ENCODE measurements at regions of chr6 and their contacts with region 1.

Region 1: DNA sequence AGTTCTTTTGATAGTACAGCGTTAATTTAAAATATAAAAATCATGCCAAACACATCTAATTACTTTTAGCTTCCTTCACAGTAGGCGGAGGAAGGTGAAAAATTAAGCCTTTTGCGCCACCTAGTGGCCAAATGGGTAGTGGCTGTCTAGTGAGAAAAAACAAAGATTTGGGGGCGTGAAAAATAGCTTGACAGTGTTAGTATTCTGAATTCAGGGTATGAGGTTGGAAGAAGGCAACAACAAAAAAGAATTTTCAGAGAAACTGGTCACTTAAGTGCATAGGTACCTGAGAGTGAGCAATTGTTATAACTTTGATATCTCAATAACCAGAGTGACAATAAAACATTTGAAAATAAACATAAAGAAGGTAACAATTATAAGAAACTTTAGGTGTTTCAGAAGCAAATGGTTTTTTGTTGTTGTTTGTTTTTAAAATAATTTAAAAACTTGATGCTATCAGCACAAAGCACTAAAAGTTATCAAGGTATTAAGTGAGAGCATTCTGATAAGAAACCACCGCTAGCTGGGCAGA is 14.3 kb downstream of the PSMB9 start:
- DNase-seq: peak in 1 of 2 donors; percentile 89
- H3K4me3 ChIP-seq: no peak overlapping the region
- H3K27ac ChIP-seq: no peak overlapping the region
- H3K4me1 ChIP-seq: no peaks in the 10 kb centered on the region
- H3K27me3 ChIP-seq: no peaks in the 10 kb centered on the region
- CTCF ChIP-seq: peak; percentile 81 to 87 (median 85)

Region 2: GRCh38 chr6:32825966-32826365 is 42.4 kb before region 1 on chr6:
- intact Hi-C with region 1: loop called (anchors 5 kb)
- DNase-seq: no peak
- H3K4me3 ChIP-seq: no peak overlapping the region
- H3K27ac ChIP-seq: no peak overlapping the region
- H3K4me1 ChIP-seq: no peaks in the 10 kb centered on the region
- H3K27me3 ChIP-seq: no peaks in the 10 kb centered on the region
- CTCF ChIP-seq: peak in 2 of 3 experiments; percentile 30 to 46

Region 3: GRCh38 chr6:32838114-32838958 is 30.0 kb before region 1 on chr6 and contains the start of gene TAP2:
- intact Hi-C with region 1: loop called (anchors 1 kb)
- DNase-seq: peak; percentile 84 to 98
- H3K4me3 ChIP-seq: peak within 1 kb of the TSS; percentile 79 to 85
- H3K27ac ChIP-seq: peak within 1 kb of the TSS; percentile 93 to 94
- H3K4me1 ChIP-seq: peaks cover 0 to 3% of the 10 kb centered on the region in 2 donors
- H3K27me3 ChIP-seq: no peaks in the 10 kb centered on the region
- CTCF ChIP-seq: peak; percentile 95 to 97 (median 96)
- total RNA-seq, gene TAP2: 26.7 TPM

Region 4: GRCh38 chr6:33620856-33621710 is 752.8 kb after region 1 on chr6 and contains the start of gene ITPR3:
- intact Hi-C with region 1: no loop called
- DNase-seq: no peak
- H3K4me3 ChIP-seq: peak within 1 kb of the TSS; percentile 80 to 81
- H3K27ac ChIP-seq: peak within 1 kb of the TSS; percentile 56 to 66
- H3K4me1 ChIP-seq: peaks cover 4 to 13% of the 10 kb centered on the region in 2 donors
- H3K27me3 ChIP-seq: no peaks in the 10 kb centered on the region
- CTCF ChIP-seq: no peak
- total RNA-seq, gene ITPR3: 43.0 TPM

Measured in ascending aorta (tissue), 2 donors.